Endothelial cell of umbilical vein (primary cell): ENCODE measurements at regions of chr10 and their contacts with region 1.

Region 1: GRCh38 chr10:132353456-132354355 is 21.7 kb downstream of the LRRC27 start:
- DNase-seq: no peak
- H3K4me3 ChIP-seq: no peak overlapping the region
- H3K27ac ChIP-seq: no peak overlapping the region
- H3K4me1 ChIP-seq: no peaks in the 10 kb centered on the region
- H3K27me3 ChIP-seq: no peaks in the 10 kb centered on the region
- CTCF ChIP-seq: no peak
- POLR2A ChIP-seq: no peak

Region 2: DNA sequence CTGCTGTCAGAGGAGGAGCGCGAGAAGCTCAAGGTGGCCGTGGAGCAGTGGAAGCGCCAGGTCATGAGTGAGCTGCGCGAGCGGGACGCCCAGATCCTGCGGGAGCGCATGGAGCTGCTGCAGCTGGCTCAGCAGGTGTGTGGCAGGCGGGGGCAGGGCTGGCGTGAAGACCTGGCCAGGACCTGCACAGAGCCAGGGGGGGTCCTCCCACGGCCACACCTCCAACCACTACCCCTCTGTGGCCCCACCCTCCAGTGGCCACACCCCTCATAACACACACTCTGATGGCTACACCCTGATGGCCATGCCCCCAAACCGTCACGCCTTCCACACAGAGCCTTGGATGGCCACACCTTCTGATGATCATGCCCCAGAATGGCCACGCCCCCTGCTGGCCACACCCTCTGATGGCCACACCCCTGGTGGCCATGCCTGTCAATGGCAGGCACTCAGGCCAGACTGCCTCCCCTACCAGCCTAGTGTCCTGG is 190.4 kb before region 1 on chr10:
- CTCF ChIA-PET with region 1: no interaction called
- POLR2A ChIA-PET with region 1: no interaction called
- dilution Hi-C with region 1: no loop called
- intact Hi-C with region 1: no loop called
- DNase-seq: no peak
- H3K4me3 ChIP-seq: no peak overlapping the region
- H3K27ac ChIP-seq: no peak overlapping the region
- H3K4me1 ChIP-seq: no peaks in the 10 kb centered on the region
- H3K27me3 ChIP-seq: no peaks in the 10 kb centered on the region
- CTCF ChIP-seq: no peak
- POLR2A ChIP-seq: no peak

Region 3: DNA sequence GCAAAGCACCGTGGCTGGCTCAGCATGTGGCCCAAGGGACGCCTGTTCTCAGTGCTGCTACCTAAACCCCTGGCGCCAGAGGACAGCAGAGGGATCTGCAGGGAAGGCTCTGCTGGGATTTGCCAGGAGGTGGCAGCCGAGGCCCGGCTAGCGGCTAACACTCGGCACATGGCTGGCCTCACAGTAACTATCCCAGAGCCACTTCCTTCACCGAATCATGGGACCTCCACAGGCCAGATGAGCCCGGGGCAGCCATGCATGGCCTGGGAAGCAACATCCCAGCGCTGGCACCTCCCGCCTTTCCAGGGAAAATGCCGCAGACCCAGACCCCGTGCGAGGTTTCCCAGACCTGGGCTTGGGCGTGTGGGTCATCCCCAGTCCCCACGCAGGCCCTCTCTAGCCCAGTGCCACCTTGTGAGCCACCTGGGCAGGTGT is 130.5 kb before region 1 on chr10:
- CTCF ChIA-PET with region 1: interaction called, 15 read pairs
- POLR2A ChIA-PET with region 1: no interaction called
- dilution Hi-C with region 1: no loop called
- intact Hi-C with region 1: loop called (anchors 1 kb)
- DNase-seq: peak; percentile 79
- H3K4me3 ChIP-seq: no peak overlapping the region
- H3K27ac ChIP-seq: no peak overlapping the region
- H3K4me1 ChIP-seq: no peaks in the 10 kb centered on the region
- H3K27me3 ChIP-seq: no peaks in the 10 kb centered on the region
- CTCF ChIP-seq: peak; percentile 87 to 98
- POLR2A ChIP-seq: no peak

Region 4: DNA sequence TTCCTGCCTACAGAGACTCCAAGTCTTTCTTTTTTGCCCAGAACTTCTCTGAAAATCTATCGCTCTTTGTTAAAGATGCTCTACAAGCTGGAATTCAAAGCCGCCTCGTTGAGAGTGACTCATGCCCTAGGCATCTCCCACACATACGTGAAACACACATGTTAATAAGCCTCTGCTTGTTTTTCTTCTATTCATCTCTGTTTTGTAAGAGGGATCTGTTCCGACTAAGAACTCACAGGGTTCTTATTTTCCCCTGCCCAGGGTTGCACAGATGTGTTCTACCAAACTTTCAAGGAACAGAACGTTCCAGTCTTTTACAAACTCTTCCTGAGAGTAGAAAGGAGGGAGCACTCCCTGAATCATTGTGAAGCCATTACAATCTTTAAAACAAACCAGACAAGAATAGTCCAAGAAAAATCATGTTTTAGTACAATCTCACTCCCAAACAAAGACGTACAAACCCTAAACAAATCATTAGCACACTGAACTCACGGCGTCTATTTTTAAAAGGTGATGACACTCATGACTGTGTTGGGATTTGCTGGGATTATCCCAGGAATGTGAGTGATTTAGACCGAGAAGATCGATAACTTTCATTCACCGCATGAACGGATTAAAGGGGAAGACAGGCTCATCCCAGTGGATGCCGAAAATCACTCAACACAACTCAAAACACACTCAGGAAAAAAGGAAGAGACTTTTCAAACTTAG is 128.5 kb after region 1 on chr10:
- CTCF ChIA-PET with region 1: no interaction called
- POLR2A ChIA-PET with region 1: no interaction called
- dilution Hi-C with region 1: no loop called
- intact Hi-C with region 1: no loop called
- DNase-seq: peak; percentile 17
- H3K4me3 ChIP-seq: no peak overlapping the region
- H3K27ac ChIP-seq: no peak overlapping the region
- H3K4me1 ChIP-seq: no peaks in the 10 kb centered on the region
- H3K27me3 ChIP-seq: peaks cover 2 to 7% of the 10 kb centered on the region in 2 experiments
- CTCF ChIP-seq: no peak
- POLR2A ChIP-seq: no peak